B cell (primary cell): ENCODE measurements at regions of chr6 and their contacts with region 1.

Region 1: GRCh38 chr6:2988426-2989331 is 11.0 kb upstream of the NQO2 start:
- DNase-seq: peak; percentile 90
- ATAC-seq: peak; percentile 80
- H3K4me3 ChIP-seq: peak overlapping the region; percentile 79 to 93 (median 91)
- H3K4me3 Mint-ChIP-seq: peak overlapping the region; percentile 98
- H3K27ac ChIP-seq: peak overlapping the region; percentile 94 to 97
- H3K27ac Mint-ChIP-seq: peak overlapping the region; percentile 100
- H3K4me1 ChIP-seq: peaks cover 10 to 22% of the 10 kb centered on the region in 2 donors
- H3K4me1 Mint-ChIP-seq: peaks cover 25% of the 10 kb centered on the region
- H3K27me3 ChIP-seq: no peaks in the 10 kb centered on the region
- H3K27me3 Mint-ChIP-seq: peaks cover 2% of the 10 kb centered on the region
- CTCF ChIP-seq: peak; percentile 88

Region 2: DNA sequence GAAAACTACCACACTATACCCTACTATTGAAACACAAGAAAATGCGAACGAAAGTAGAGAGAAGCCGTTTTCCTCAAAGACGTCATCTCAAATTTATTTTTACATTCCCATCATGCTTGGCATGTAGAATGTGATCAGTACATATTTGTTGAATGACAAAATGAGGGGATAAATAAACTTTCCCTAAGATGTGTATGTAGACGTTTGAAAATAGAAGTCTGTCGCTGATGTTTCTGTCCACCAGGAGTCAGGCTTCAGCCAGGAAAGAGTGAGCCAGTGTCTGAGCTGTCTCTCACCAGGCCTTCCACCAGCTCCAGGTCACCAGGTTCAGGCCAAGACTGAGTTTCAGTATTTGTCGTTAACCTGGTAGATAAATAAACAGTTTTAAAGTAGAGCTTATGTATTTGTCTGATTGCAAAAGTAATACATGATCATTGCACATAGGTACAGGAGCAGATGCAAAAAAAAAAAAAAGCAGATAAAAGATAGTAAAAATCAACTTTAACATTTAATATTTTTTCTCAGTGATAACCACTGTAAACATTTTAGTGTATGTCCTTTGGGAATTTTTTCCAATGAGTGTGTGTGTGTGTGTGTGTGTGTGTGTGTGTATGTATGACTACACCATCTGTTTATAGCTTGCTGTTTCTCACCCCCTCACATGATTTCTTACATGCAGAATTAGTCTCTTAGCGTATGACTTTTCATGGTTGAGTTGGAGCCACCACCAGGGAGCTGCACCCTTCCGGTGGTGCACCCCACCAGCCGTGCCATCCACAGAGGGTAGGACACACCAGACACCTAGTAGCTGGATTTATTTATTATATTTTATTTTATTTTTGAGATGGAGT is 197.3 kb before region 1 on chr6:
- CTCF ChIA-PET with region 1: interaction called, 48 read pairs
- POLR2A ChIA-PET with region 1: interaction called, 3 read pairs
- intact Hi-C with region 1: loop called (anchors 1 kb)
- DNase-seq: peak; percentile 78
- ATAC-seq: peak; percentile 83
- H3K4me3 ChIP-seq: no peak overlapping the region
- H3K4me3 Mint-ChIP-seq: peak overlapping the region; percentile 67
- H3K27ac ChIP-seq: peak overlapping the region in 1 of 2 donors; percentile 18
- H3K27ac Mint-ChIP-seq: peak overlapping the region; percentile 82
- H3K4me1 ChIP-seq: peaks cover 30 to 35% of the 10 kb centered on the region in 2 donors
- H3K4me1 Mint-ChIP-seq: peaks cover 36% of the 10 kb centered on the region
- H3K27me3 ChIP-seq: no peaks in the 10 kb centered on the region
- H3K27me3 Mint-ChIP-seq: no peaks in the 10 kb centered on the region
- CTCF ChIP-seq: peak; percentile 82

Region 3: GRCh38 chr6:2853761-2854395 is 134.8 kb before region 1 on chr6:
- CTCF ChIA-PET with region 1: interaction called, 103 read pairs
- POLR2A ChIA-PET with region 1: interaction called, 8 read pairs
- intact Hi-C with region 1: loop called (anchors 2 kb)
- DNase-seq: peak; percentile 85
- ATAC-seq: peak; percentile 39
- H3K4me3 ChIP-seq: peak overlapping the region in 3 of 5 experiments; percentile 31 to 52 (median 31)
- H3K4me3 Mint-ChIP-seq: peak overlapping the region; percentile 74
- H3K27ac ChIP-seq: peak overlapping the region; percentile 73 to 84
- H3K27ac Mint-ChIP-seq: peak overlapping the region; percentile 98
- H3K4me1 ChIP-seq: peaks cover 54 to 62% of the 10 kb centered on the region in 2 donors
- H3K4me1 Mint-ChIP-seq: peaks cover 68% of the 10 kb centered on the region
- H3K27me3 ChIP-seq: no peaks in the 10 kb centered on the region
- H3K27me3 Mint-ChIP-seq: no peaks in the 10 kb centered on the region
- CTCF ChIP-seq: peak; percentile 69

Region 4: GRCh38 chr6:2940010-2940850 is 48.4 kb before region 1 on chr6:
- CTCF ChIA-PET with region 1: interaction called, 81 read pairs
- POLR2A ChIA-PET with region 1: interaction called, 11 read pairs
- intact Hi-C with region 1: loop called (anchors 2 kb)
- DNase-seq: peak; percentile 72
- ATAC-seq: peak; percentile 59
- H3K4me3 ChIP-seq: peak overlapping the region in 4 of 5 experiments; percentile 5 to 55 (median 42)
- H3K4me3 Mint-ChIP-seq: peak overlapping the region; percentile 86
- H3K27ac ChIP-seq: peak overlapping the region; percentile 31 to 68
- H3K27ac Mint-ChIP-seq: peak overlapping the region; percentile 93
- H3K4me1 ChIP-seq: peaks cover 45 to 62% of the 10 kb centered on the region in 2 donors
- H3K4me1 Mint-ChIP-seq: peaks cover 70% of the 10 kb centered on the region
- H3K27me3 ChIP-seq: no peaks in the 10 kb centered on the region
- H3K27me3 Mint-ChIP-seq: no peaks in the 10 kb centered on the region
- CTCF ChIP-seq: no peak

Region 5: DNA sequence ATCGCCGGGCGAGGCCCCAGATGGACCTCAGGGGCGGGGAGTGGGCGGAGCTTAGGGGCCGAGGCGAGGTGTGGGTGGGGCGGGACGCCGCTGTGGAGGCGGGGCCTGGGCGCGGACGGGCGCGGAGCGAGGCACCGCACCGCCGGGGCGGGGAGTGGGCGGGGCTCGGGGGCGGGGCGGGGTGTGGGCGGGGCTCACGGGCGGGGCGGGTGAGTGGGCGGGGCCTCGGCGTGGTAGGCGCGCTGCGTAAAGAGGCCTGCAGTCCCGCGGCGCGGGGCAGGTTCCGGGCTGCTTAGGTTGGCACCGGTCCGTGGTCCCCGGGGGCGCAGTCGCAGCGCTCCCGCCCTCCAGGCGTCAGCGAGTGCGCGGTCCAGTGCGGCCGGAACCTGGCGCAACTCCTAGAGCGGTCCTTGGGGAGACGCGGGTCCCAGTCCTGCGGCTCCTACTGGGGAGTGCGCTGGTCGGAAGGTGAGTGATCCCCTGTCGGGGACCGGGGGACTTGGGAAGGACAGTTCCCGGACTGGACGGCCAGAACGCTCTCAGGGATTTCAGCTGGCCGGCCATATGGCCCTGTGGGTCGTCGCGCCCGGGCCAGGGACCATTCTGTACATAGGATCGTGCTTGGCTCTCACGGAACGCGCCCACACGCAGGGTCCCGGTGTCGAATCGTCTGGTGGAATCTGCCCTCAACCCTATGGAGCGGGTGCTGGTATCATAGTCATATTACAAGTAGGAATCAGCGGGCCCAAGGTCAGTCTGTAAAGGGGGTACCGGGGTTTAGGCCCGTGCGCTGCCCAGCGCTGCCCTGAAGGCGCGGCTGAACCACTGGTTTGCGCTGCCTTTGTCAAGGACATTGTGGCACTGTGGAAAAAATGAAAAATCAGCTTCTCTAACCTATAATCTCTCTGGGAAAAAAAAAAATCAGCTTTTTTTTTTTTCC is 11.2 kb after region 1 on chr6 and contains the start of gene NQO2:
- CTCF ChIA-PET with region 1: interaction called, 14 read pairs
- POLR2A ChIA-PET with region 1: interaction called, 3 read pairs
- intact Hi-C with region 1: loop called (anchors 1 kb)
- DNase-seq: peak; percentile 92
- ATAC-seq: peak; percentile 88
- H3K4me3 ChIP-seq: peak within 1 kb of the TSS; percentile 65 to 91 (median 85)
- H3K4me3 Mint-ChIP-seq: peak within 1 kb of the TSS; percentile 96
- H3K27ac ChIP-seq: peak within 1 kb of the TSS; percentile 65 to 71
- H3K27ac Mint-ChIP-seq: peak within 1 kb of the TSS; percentile 89
- H3K4me1 ChIP-seq: peaks cover 11 to 21% of the 10 kb centered on the region in 2 donors
- H3K4me1 Mint-ChIP-seq: peaks cover 20% of the 10 kb centered on the region
- H3K27me3 ChIP-seq: no peaks in the 10 kb centered on the region
- H3K27me3 Mint-ChIP-seq: no peaks in the 10 kb centered on the region
- CTCF ChIP-seq: no peak
- total RNA-seq, gene NQO2: 17.9 and 21.5 TPM in 2 replicates

Region 6: DNA sequence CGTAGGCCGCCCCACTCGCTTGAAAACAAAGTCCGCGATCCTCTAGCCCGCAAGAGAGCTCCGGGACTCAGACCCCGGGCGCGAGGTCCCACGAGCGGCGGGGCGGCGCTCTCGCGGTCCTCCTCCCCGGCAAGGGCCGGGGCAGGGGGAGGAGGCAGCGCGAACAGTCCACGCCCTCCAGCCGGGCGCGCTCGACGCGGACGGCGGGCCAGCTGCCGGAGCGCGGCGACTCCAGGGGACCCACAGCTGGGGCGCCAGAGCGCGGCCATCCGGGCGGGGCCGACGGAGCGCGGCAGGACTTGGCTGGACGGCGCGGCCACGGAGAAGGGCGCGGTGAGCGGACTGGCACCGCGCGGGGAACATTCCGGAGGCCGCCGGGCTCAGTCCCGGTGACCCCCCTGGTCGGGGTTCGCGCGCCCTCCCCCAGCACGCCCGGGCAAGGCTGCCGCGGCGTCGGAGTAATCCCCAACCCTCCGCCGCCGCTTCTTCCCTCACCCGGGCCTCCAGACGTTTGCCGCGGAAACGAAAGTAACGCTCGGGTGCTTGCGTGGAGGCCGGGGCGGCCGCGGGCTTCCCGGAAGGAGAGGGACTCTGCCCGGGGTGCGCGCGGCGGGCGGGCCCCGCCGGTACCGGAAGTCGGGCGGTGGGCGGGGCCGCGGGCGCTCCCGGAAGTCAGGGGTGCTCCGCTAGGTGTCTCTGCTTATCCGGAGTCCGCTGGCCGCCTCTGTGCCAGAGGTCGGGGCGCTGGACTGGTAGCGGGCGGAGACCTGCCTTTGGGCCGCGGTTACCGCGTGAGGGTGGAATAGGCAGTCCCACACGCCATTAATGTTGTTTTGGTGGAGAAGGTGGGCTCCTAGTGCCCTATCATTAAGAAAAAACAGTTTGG is 79.9 kb after region 1 on chr6 and contains the start of gene RIPK1:
- CTCF ChIA-PET with region 1: interaction called, 8 read pairs
- POLR2A ChIA-PET with region 1: interaction called, 13 read pairs
- intact Hi-C with region 1: no loop called
- DNase-seq: peak; percentile 95
- ATAC-seq: peak; percentile 73
- H3K4me3 ChIP-seq: peak within 1 kb of the TSS; percentile 55 to 87 (median 85)
- H3K4me3 Mint-ChIP-seq: peak within 1 kb of the TSS; percentile 98
- H3K27ac ChIP-seq: peak within 1 kb of the TSS; percentile 92 to 99
- H3K27ac Mint-ChIP-seq: peak within 1 kb of the TSS; percentile 99
- H3K4me1 ChIP-seq: peaks cover 17 to 23% of the 10 kb centered on the region in 2 donors
- H3K4me1 Mint-ChIP-seq: peaks cover 43% of the 10 kb centered on the region
- H3K27me3 ChIP-seq: no peaks in the 10 kb centered on the region
- H3K27me3 Mint-ChIP-seq: no peaks in the 10 kb centered on the region
- CTCF ChIP-seq: no peak
- total RNA-seq, gene RIPK1: 26.2 and 28.1 TPM in 2 replicates

Region 7: DNA sequence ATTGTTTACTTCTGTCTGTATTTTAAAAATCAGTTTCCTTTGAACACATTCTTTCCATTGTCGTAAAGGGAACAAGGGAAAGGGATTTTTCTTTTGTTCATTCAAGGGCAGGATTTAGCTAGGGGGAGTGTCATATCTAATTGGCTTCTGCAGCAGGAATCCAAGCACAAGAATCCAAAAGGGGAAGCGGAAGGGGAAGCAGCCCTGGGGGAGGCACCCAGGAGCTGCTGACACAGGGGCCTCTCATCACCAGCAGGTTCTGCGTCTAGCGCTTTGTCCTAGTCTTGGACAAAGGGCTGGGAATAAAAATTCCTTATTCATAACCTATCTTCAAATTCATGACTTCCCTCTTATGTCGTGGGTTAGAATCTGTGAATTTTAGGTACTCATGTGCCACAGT is 93.3 kb after region 1 on chr6:
- CTCF ChIA-PET with region 1: no interaction called
- POLR2A ChIA-PET with region 1: no interaction called
- intact Hi-C with region 1: no loop called
- DNase-seq: no peak
- ATAC-seq: no peak
- H3K4me3 ChIP-seq: no peak overlapping the region
- H3K4me3 Mint-ChIP-seq: no peak overlapping the region
- H3K27ac ChIP-seq: no peak overlapping the region
- H3K27ac Mint-ChIP-seq: no peak overlapping the region
- H3K4me1 ChIP-seq: no peaks in the 10 kb centered on the region
- H3K4me1 Mint-ChIP-seq: peaks cover 4% of the 10 kb centered on the region
- H3K27me3 ChIP-seq: no peaks in the 10 kb centered on the region
- H3K27me3 Mint-ChIP-seq: no peaks in the 10 kb centered on the region
- CTCF ChIP-seq: no peak

Region 8: GRCh38 chr6:4018172-4018905 is 1029.7 kb after region 1 on chr6:
- CTCF ChIA-PET with region 1: no interaction called
- POLR2A ChIA-PET with region 1: no interaction called
- intact Hi-C with region 1: loop called (anchors 5 kb)
- DNase-seq: peak; percentile 98
- ATAC-seq: peak; percentile 73
- H3K4me3 ChIP-seq: peak overlapping the region; percentile 71 to 91 (median 80)
- H3K4me3 Mint-ChIP-seq: peak overlapping the region; percentile 96
- H3K27ac ChIP-seq: peak overlapping the region; percentile 94 to 97
- H3K27ac Mint-ChIP-seq: peak overlapping the region; percentile 99
- H3K4me1 ChIP-seq: peaks cover 30 to 40% of the 10 kb centered on the region in 2 donors
- H3K4me1 Mint-ChIP-seq: peaks cover 70% of the 10 kb centered on the region
- H3K27me3 ChIP-seq: no peaks in the 10 kb centered on the region
- H3K27me3 Mint-ChIP-seq: no peaks in the 10 kb centered on the region
- CTCF ChIP-seq: peak; percentile 43